CD4-positive, alpha-beta memory T cell (primary cell): ENCODE measurements at regions of chr22 and their contacts with region 1.

Region 1: GRCh38 chr22:21001560-21002325 is at the start of gene THAP7:
- DNase-seq: peak; percentile 97 to 99 (median 98)
- H3K4me3 ChIP-seq: peak within 1 kb of the TSS; percentile 79 to 92
- H3K4me3 Mint-ChIP-seq: peak within 1 kb of the TSS; percentile 88 to 98 (median 96)
- H3K27ac ChIP-seq: peak within 1 kb of the TSS; percentile 95
- H3K27ac Mint-ChIP-seq: peak within 1 kb of the TSS; percentile 98 to 100 (median 100)
- H3K4me1 ChIP-seq: peaks cover 34% of the 10 kb centered on the region
- H3K4me1 Mint-ChIP-seq: peaks cover 13 to 50% (median 24%) of the 10 kb centered on the region in 4 donors
- H3K27me3 ChIP-seq: no peaks in the 10 kb centered on the region
- H3K27me3 Mint-ChIP-seq: no peaks in the 10 kb centered on the region
- total RNA-seq, gene THAP7: 60.4 to 65.0 TPM

Region 2: GRCh38 chr22:20858615-20859416 is 142.9 kb before region 1 on chr22 and contains the starts of genes PI4KA and SNAP29:
- CTCF ChIA-PET with region 1: no interaction called
- POLR2A ChIA-PET with region 1: interaction called, 3 read pairs
- intact Hi-C with region 1: loop called (anchors 2 kb)
- DNase-seq: peak; percentile 97 to 98 (median 98)
- H3K4me3 ChIP-seq: peak within 1 kb of the TSS; percentile 19 to 80
- H3K4me3 Mint-ChIP-seq: peak within 1 kb of the TSS; percentile 85 to 95 (median 88)
- H3K27ac ChIP-seq: peak within 1 kb of the TSS; percentile 79
- H3K27ac Mint-ChIP-seq: peak within 1 kb of the TSS; percentile 85 to 94 (median 92)
- H3K4me1 ChIP-seq: peaks cover 63% of the 10 kb centered on the region
- H3K4me1 Mint-ChIP-seq: peaks cover 33 to 80% (median 61%) of the 10 kb centered on the region in 4 donors
- H3K27me3 ChIP-seq: no peaks in the 10 kb centered on the region
- H3K27me3 Mint-ChIP-seq: no peaks in the 10 kb centered on the region
- total RNA-seq, gene PI4KA: 142 to 145 TPM
- total RNA-seq, gene SNAP29: 24.4 to 26.1 TPM

Region 3: DNA sequence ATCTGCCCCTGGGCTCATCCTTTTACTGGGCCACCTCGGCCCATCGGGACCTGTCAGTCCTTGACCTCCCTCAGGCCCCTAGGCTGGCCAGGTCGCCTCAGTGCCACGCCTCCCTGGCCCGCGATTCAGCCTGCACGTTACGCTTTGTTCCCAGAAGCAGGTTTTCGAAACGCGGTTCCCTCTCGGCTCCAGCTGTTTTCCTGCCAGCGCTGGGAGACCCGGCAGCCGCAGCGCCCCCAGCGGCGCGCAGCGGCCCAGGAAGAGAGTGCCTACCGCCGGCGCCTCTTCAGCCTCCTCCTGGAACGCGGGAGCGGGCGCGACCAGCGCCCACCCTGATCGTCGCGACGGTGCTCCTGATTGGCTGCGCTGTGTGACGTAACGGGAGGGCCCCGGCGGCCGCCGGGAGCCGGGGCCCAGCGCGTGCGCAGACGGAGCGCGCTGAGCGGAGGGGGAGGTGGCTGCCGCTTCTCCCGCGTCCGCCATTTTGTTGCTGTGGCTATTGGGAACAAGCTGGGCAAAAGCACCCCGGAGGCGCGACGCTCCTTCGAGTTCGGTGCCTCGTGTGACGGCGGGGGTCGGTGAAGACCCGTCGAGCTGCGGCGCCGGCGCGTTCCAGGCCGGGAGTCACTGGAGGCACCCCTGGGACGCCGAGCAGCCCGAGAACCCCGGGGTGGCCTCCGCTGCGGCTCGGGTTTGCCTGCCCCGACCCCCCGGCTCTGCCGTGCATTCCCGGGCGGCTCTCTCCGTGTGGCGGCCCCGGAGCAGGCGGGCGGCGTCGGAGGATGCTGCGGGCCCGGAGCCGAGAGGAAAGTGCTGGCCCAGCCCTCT is 84.5 kb before region 1 on chr22 and contains the start of gene CRKL:
- CTCF ChIA-PET with region 1: interaction called, 3 read pairs
- POLR2A ChIA-PET with region 1: interaction called, 6 read pairs
- intact Hi-C with region 1: loop called (anchors 1 kb)
- DNase-seq: peak; percentile 94 to 96 (median 96)
- H3K4me3 ChIP-seq: peak within 1 kb of the TSS; percentile 88 to 93
- H3K4me3 Mint-ChIP-seq: peak within 1 kb of the TSS; percentile 88 to 99 (median 98)
- H3K27ac ChIP-seq: peak within 1 kb of the TSS; percentile 88
- H3K27ac Mint-ChIP-seq: peak within 1 kb of the TSS; percentile 92 to 97 (median 96)
- H3K4me1 ChIP-seq: peaks cover 40% of the 10 kb centered on the region
- H3K4me1 Mint-ChIP-seq: peaks cover 22 to 53% (median 36%) of the 10 kb centered on the region in 4 donors
- H3K27me3 ChIP-seq: no peaks in the 10 kb centered on the region
- H3K27me3 Mint-ChIP-seq: no peaks in the 10 kb centered on the region
- total RNA-seq, gene CRKL: 85.1 to 86.5 TPM

Region 4: DNA sequence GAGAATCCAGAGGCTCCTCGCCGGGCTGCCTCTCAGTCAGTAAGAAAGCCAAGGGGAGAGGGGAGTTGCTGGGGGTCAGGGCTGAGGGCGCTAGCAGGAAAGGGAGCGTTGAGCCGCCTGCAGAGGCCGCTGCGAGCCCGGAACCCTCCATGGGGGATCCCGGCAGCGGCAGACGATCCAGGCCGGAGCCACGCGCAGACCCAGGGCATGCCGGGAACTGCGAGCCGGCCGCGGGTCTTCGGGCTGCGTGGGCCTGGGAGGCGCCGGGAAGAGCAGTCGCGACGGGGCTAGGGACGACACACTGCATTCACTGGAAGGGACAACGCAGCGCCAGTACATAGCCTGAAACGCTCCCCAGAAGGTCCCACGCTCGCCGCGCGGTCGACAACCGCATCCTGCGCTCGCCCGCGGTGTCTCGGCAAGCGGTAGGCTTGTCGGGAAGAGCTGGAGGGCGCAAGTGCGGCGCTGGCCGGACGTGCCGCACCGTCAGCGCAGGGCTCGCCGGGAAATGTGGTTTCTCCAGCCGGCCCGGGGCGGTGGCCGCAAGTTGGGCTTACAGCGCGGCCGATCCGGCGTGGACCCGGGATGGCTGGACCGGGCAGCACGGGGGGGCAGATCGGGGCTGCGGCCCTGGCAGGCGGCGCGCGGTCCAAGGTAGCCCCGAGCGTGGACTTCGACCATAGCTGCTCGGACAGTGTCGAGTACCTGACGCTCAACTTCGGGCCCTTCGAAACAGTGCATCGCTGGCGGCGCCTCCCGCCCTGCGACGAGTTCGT is 19.8 kb before region 1 on chr22 and contains the start of gene LZTR1:
- CTCF ChIA-PET with region 1: interaction called, 4 read pairs
- POLR2A ChIA-PET with region 1: interaction called, 45 read pairs
- intact Hi-C with region 1: loop called (anchors 1 kb)
- DNase-seq: peak; percentile 57 to 77 (median 64)
- H3K4me3 ChIP-seq: peak within 1 kb of the TSS; percentile 62 to 64
- H3K4me3 Mint-ChIP-seq: peak within 1 kb of the TSS; percentile 88 to 96 (median 95)
- H3K27ac ChIP-seq: peak within 1 kb of the TSS; percentile 77
- H3K27ac Mint-ChIP-seq: peak within 1 kb of the TSS; percentile 90 to 95 (median 93)
- H3K4me1 ChIP-seq: peaks cover 19% of the 10 kb centered on the region
- H3K4me1 Mint-ChIP-seq: peaks cover 21 to 42% (median 30%) of the 10 kb centered on the region in 4 donors
- H3K27me3 ChIP-seq: no peaks in the 10 kb centered on the region
- H3K27me3 Mint-ChIP-seq: no peaks in the 10 kb centered on the region
- total RNA-seq, gene LZTR1: 112 to 114 TPM

Region 5: GRCh38 chr22:20989323-20990138 is 12.2 kb before region 1 on chr22:
- CTCF ChIA-PET with region 1: interaction called, 3 read pairs
- POLR2A ChIA-PET with region 1: interaction called, 13 read pairs
- intact Hi-C with region 1: no loop called
- DNase-seq: no peak
- H3K4me3 ChIP-seq: no peak overlapping the region
- H3K4me3 Mint-ChIP-seq: no peak overlapping the region
- H3K27ac ChIP-seq: no peak overlapping the region
- H3K27ac Mint-ChIP-seq: peak overlapping the region in 1 of 7 donors; percentile 43
- H3K4me1 ChIP-seq: no peaks in the 10 kb centered on the region
- H3K4me1 Mint-ChIP-seq: peaks cover 0 to 8% (median 5%) of the 10 kb centered on the region in 4 donors
- H3K27me3 ChIP-seq: no peaks in the 10 kb centered on the region
- H3K27me3 Mint-ChIP-seq: no peaks in the 10 kb centered on the region

Region 6: DNA sequence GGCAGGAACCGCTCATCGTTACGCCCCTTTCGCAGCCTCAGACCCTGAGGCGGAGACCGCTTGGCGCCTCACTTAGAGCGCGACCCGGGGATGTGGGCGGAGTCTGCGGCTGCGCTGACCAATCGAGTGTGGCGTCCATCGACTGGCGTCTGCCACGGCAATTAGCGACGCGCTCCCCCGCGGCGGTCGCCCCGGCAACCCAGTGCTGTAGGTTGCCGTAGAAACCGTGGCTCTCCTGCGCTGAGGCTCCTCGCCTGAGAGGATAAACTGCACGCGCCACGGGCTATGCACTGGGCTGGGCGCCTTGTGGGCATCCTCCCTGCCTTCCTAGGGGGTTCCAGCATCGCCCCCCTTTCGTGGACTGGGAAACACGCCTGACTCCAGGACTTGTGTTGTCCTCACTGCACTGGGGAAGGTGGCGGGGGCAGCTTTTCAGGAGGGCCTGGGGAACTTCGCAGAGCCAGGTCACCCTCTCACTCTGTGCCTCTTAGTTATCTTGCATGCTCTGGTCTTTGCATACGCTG is 12.5 kb after region 1 on chr22:
- CTCF ChIA-PET with region 1: interaction called, 4 read pairs
- POLR2A ChIA-PET with region 1: interaction called, 48 read pairs
- intact Hi-C with region 1: no loop called
- DNase-seq: peak; percentile 79 to 88 (median 84)
- H3K4me3 ChIP-seq: peak overlapping the region; percentile 51 to 55
- H3K4me3 Mint-ChIP-seq: peak overlapping the region; percentile 78 to 93 (median 88)
- H3K27ac ChIP-seq: peak overlapping the region; percentile 61
- H3K27ac Mint-ChIP-seq: peak overlapping the region; percentile 86 to 99 (median 97)
- H3K4me1 ChIP-seq: peaks cover 23% of the 10 kb centered on the region
- H3K4me1 Mint-ChIP-seq: peaks cover 16 to 36% (median 23%) of the 10 kb centered on the region in 4 donors
- H3K27me3 ChIP-seq: no peaks in the 10 kb centered on the region
- H3K27me3 Mint-ChIP-seq: no peaks in the 10 kb centered on the region

Region 7: GRCh38 chr22:21087119-21087518 is 85.4 kb after region 1 on chr22:
- CTCF ChIA-PET with region 1: no interaction called
- POLR2A ChIA-PET with region 1: no interaction called
- intact Hi-C with region 1: no loop called
- DNase-seq: no peak
- H3K4me3 ChIP-seq: no peak overlapping the region
- H3K4me3 Mint-ChIP-seq: no peak overlapping the region
- H3K27ac ChIP-seq: no peak overlapping the region
- H3K27ac Mint-ChIP-seq: no peak overlapping the region
- H3K4me1 ChIP-seq: no peaks in the 10 kb centered on the region
- H3K4me1 Mint-ChIP-seq: no peaks in the 10 kb centered on the region
- H3K27me3 ChIP-seq: no peaks in the 10 kb centered on the region
- H3K27me3 Mint-ChIP-seq: peaks cover 0 to 4% of the 10 kb centered on the region in 2 donors

Region 8: GRCh38 chr22:21629262-21630149 is 627.8 kb after region 1 on chr22 and contains the start of gene YDJC:
- CTCF ChIA-PET with region 1: no interaction called
- POLR2A ChIA-PET with region 1: interaction called, 6 read pairs
- intact Hi-C with region 1: loop called (anchors 5 kb)
- DNase-seq: peak; percentile 93 to 95 (median 93)
- H3K4me3 ChIP-seq: peak within 1 kb of the TSS; percentile 78 to 92
- H3K4me3 Mint-ChIP-seq: peak within 1 kb of the TSS; percentile 92 to 95 (median 94)
- H3K27ac ChIP-seq: peak within 1 kb of the TSS; percentile 87
- H3K27ac Mint-ChIP-seq: peak within 1 kb of the TSS; percentile 89 to 98 (median 96)
- H3K4me1 ChIP-seq: peaks cover 64% of the 10 kb centered on the region
- H3K4me1 Mint-ChIP-seq: peaks cover 25 to 65% (median 43%) of the 10 kb centered on the region in 4 donors
- H3K27me3 ChIP-seq: no peaks in the 10 kb centered on the region
- H3K27me3 Mint-ChIP-seq: no peaks in the 10 kb centered on the region
- total RNA-seq, gene YDJC: 45.7 to 46.0 TPM